Lower leg skin (tissue), 4 donors: ENCODE measurements at regions of chr7 and their contacts with region 1.

Region 1: DNA sequence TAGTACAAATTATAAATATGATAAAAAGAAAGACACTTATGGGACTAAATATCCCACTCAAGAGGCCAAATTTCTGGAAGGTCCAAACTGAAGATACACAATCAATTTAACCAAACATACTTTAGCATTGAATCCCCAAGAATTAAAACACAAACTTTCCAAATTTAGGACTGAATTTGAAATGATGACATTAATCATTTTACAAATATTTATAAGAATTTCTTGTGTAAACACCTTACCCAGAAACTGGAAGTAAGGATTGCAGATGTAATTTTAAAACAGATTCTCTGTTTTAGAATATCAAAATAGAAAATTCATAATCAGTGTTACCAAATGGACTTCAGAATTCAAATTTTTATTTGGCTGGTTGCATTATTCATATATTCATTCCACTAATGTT is 588.2 kb upstream of the KCND2 start:
- DNase-seq: no peak
- H3K4me3 ChIP-seq: no peak overlapping the region
- CTCF ChIP-seq: no peak
- POLR2A ChIP-seq: no peak

Region 2: DNA sequence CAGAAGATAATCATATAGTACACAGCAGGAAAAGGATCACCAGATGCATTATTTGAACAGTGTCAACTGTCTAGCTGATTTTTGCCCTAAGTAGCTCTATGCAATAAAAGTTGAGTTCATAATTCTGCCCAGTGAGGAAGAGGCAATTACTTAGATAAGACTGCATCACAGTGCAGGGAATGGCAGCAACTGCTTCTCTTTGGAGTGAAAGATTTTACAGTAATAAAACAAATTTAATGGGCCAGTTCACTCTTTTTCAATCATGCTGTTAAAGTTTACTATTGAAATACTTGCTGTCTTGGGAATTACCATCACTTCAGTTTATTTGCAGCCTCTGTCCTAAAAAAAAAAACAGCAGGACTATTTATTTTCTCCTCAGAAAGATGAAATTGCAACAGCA is 552.3 kb before region 1 on chr7:
- intact Hi-C with region 1: loop called (anchors 5 kb)
- DNase-seq: no peak
- H3K4me3 ChIP-seq: no peak overlapping the region
- CTCF ChIP-seq: no peak
- POLR2A ChIP-seq: no peak

Region 3: DNA sequence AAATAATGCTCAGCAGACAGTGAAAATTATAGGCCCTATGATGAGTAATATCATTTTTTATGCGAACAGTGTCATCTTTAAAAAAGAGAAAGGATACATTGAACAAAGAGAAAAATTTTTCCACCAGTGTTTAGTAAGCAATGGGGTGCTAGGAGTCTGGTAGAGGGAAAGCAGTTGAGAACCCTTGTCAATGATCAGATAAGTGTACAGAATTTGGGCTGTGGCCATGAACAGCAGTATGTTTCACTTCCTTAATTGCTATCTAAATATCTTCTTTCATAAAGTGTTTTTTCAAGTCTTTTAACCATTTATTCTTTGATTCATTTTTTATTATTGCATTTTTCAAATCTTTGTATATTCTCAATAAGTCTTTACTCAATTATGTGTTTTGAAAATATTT is 162.5 kb before region 1 on chr7:
- intact Hi-C with region 1: no loop called
- DNase-seq: no peak
- H3K4me3 ChIP-seq: no peak overlapping the region
- CTCF ChIP-seq: no peak
- POLR2A ChIP-seq: no peak